Activated T-helper 1 cell treated with anti-CD3 and anti-CD28 coated beads, Interleukin-12 subunit alpha, Interleukin-12 subunit beta, Interleukin-2, Interleukin-4 antibody, amounts not matched to agents 30 ng/mL and 10 ng/mL and 1 ng/mL, durations not matched to agents 14 hours and 24 hours and 36 hours (primary cell): ENCODE measurements at regions of chr1 and their contacts with region 1.

Region 1: GRCh38 chr1:12124693-12125421 is 41.9 kb upstream of the TNFRSF1B start:
- DNase-seq: peak; percentile 71
- H3K4me3 Mint-ChIP-seq: peak overlapping the region; percentile 20
- H3K27ac Mint-ChIP-seq: peak overlapping the region; percentile 80
- H3K4me1 Mint-ChIP-seq: peaks cover 49% of the 10 kb centered on the region
- H3K27me3 Mint-ChIP-seq: no peaks in the 10 kb centered on the region

Region 2: DNA sequence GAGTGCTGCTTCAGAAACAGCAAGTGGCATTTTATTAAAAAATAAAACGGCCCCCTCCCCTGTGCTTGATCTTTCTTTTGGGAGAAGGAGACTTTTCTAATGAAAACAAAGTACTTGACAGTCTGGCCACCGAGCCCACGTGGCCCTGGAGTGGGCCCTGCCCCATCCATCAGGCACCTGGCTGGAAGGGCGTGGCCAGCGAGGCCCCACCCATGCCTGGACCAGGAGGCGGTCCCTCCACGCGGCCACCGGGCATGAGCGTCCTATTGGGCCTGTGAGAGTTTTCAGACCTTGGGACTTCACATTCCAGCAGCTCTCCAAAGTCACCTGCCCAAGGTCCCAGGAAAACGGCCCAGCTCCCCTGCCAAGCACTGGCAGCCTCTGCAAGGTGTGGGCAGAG is 1473.1 kb before region 1 on chr1:
- intact Hi-C with region 1: no loop called
- DNase-seq: no peak
- H3K4me3 Mint-ChIP-seq: no peak overlapping the region
- H3K27ac Mint-ChIP-seq: no peak overlapping the region
- H3K4me1 Mint-ChIP-seq: no peaks in the 10 kb centered on the region
- H3K27me3 Mint-ChIP-seq: no peaks in the 10 kb centered on the region

Region 3: GRCh38 chr1:12166834-12167492 is 42.1 kb after region 1 on chr1 and contains the start of gene TNFRSF1B:
- intact Hi-C with region 1: loop called (anchors 1 kb)
- DNase-seq: peak; percentile 74
- H3K4me3 Mint-ChIP-seq: peak within 1 kb of the TSS; percentile 100
- H3K27ac Mint-ChIP-seq: peak within 1 kb of the TSS; percentile 99
- H3K4me1 Mint-ChIP-seq: peaks cover 85% of the 10 kb centered on the region
- H3K27me3 Mint-ChIP-seq: no peaks in the 10 kb centered on the region
- total RNA-seq, gene TNFRSF1B: 211 and 213 TPM in 2 replicates

Region 4: DNA sequence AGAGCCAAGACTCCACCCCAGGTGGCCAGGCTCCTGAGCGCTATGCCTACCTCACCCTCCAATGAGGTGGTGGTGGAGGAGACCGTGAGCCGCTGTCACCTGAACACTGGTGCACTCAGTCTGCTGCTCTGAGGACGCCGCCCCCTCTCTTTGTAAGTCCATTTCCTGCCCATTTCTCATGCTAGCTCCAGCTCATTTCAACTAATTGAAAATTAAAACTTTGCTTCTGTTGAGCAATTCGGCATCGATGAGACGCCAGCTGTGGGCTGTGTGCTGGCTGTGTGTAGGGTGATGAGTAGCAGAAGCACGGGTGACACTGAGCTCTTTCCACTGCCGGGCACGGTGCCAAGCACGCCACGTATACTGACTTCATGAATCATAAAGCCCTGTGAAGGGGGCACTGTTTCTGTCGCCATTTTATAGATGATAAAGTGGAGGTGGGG is 53.2 kb after region 1 on chr1:
- intact Hi-C with region 1: loop called (anchors 1 kb)
- DNase-seq: peak; percentile 62
- H3K4me3 Mint-ChIP-seq: peak overlapping the region; percentile 79
- H3K27ac Mint-ChIP-seq: peak overlapping the region; percentile 96
- H3K4me1 Mint-ChIP-seq: peaks cover 84% of the 10 kb centered on the region
- H3K27me3 Mint-ChIP-seq: no peaks in the 10 kb centered on the region

Region 5: DNA sequence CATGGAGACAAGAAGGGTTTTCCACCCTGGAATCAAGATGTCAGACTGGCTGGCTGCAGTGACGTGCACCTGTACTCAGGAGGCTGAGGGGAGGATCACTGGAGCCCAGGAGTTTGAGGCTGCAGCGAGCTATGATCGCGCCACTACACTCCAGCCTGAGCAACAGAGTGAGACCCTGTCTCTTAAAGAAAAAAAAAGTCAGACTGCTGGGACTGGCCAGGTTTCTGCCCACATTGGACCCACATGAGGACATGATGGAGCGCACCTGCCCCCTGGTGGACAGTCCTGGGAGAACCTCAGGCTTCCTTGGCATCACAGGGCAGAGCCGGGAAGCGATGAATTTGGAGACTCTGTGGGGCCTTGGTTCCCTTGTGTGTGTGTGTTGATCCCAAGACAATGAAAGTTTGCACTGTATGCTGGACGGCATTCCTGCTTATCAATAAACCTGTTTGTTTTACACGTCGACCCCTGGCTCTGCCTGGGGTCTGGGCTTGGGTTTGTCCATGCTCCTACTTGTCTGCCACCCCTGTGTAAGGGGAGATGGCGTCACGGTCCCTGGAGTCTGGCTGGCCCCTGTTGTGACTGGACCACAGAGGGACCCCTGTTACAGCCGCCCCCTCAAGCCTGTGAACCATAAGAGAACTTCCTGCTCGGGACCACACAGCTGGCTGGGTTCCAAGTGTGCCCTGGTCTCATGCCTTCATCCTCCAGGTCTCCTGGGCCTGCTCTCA is 84.1 kb after region 1 on chr1:
- intact Hi-C with region 1: loop called (anchors 1 kb)
- DNase-seq: peak; percentile 65
- H3K4me3 Mint-ChIP-seq: no peak overlapping the region
- H3K27ac Mint-ChIP-seq: peak overlapping the region; percentile 79
- H3K4me1 Mint-ChIP-seq: peaks cover 40% of the 10 kb centered on the region
- H3K27me3 Mint-ChIP-seq: peaks cover 3% of the 10 kb centered on the region

Region 6: DNA sequence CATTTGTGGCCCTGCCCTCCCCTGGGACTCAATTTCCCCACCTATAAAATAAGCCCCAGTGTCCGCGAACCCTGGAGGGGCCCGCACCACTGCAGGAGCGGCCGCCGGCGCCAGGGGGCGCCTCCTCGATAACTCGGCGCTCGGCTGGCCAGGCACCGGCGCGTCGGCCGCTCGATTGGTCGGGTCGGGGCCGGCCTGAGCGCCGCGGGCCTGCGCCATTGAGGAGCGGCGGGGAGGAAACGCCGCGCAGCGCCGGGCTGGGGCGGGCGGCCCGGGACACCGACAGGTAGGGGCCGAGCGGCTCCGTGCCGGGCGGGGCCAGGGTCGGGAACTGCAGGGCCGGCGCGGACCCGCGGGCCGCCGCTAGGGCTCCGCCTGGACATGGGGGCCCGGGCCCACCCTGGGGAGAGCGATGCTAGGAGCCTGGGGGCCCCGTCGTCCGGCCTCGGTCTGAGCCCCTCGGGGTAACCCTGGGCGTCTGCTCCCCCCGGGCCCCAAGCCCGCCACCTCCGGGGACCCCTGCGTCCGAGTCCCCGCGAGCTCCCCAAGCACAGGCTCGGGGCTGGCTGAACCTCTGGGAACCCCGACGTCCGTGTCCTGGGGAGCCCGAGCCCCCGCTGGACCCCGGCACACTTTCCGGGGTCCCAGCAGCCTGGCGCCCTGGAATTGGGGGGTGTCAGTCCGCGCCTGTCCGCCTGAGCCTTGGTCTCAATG is 105.1 kb after region 1 on chr1 and contains the start of gene VPS13D:
- intact Hi-C with region 1: loop called (anchors 1 kb)
- DNase-seq: peak; percentile 81
- H3K4me3 Mint-ChIP-seq: peak within 1 kb of the TSS; percentile 89
- H3K27ac Mint-ChIP-seq: peak within 1 kb of the TSS; percentile 52
- H3K4me1 Mint-ChIP-seq: peaks cover 14% of the 10 kb centered on the region
- H3K27me3 Mint-ChIP-seq: peaks cover 8% of the 10 kb centered on the region
- total RNA-seq, gene VPS13D: 33.6 and 35.7 TPM in 2 replicates

Region 7: DNA sequence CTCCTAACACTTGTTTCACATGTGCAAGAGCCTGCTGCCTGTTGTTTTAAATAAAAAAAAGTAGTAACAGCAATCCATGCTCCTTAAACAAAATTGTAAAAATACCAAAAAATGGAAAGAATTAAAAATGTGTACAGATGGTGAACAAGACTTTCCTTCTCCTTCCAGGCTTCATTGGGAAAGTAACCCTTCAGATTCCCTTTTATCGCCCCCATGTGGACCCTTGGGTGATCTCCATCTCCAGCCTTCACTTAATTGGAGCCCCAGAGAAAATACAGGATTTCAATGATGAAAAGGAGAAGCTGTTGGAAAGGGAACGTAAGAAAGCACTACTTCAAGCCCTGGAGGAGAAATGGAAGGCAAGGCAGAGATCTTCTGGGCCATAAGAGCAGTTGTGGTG is 119.2 kb after region 1 on chr1:
- intact Hi-C with region 1: loop called (anchors 1 kb)
- DNase-seq: no peak
- H3K4me3 Mint-ChIP-seq: no peak overlapping the region
- H3K27ac Mint-ChIP-seq: no peak overlapping the region
- H3K4me1 Mint-ChIP-seq: peaks cover 6% of the 10 kb centered on the region
- H3K27me3 Mint-ChIP-seq: no peaks in the 10 kb centered on the region

Region 8: GRCh38 chr1:12658531-12659453 is 533.9 kb after region 1 on chr1:
- intact Hi-C with region 1: loop called (anchors 2 kb)
- DNase-seq: peak; percentile 51
- H3K4me3 Mint-ChIP-seq: peak overlapping the region; percentile 40
- H3K27ac Mint-ChIP-seq: no peak overlapping the region
- H3K4me1 Mint-ChIP-seq: peaks cover 7% of the 10 kb centered on the region
- H3K27me3 Mint-ChIP-seq: peaks cover 20% of the 10 kb centered on the region